ENCODE measurements at regions of chr1 and their contacts with region 1.

Region 1: GRCh38 chr1:42586016-42586415 is 72.2 kb upstream of the PPIH start:
- DNase-seq: no peak
- H3K4me3 ChIP-seq: no peak overlapping the region
- H3K27ac ChIP-seq: no peak overlapping the region
- H3K4me1 ChIP-seq: no peaks in the 10 kb centered on the region
- H3K27me3 ChIP-seq: no peaks in the 10 kb centered on the region
- CTCF ChIP-seq: no peak
- EP300 ChIP-seq: no peak
- POLR2A ChIP-seq: no peak
- RAD21 ChIP-seq: no peak

Region 2: GRCh38 chr1:42613803-42614131 is 27.8 kb after region 1 on chr1:
- CTCF ChIA-PET with region 1: interaction called, 11 read pairs
- POLR2A ChIA-PET with region 1: no interaction called
- DNase-seq: no peak
- H3K4me3 ChIP-seq: no peak overlapping the region
- H3K27ac ChIP-seq: no peak overlapping the region
- H3K4me1 ChIP-seq: no peaks in the 10 kb centered on the region
- H3K27me3 ChIP-seq: no peaks in the 10 kb centered on the region
- CTCF ChIP-seq: no peak
- EP300 ChIP-seq: no peak
- POLR2A ChIP-seq: no peak
- RAD21 ChIP-seq: no peak